Activated CD4-positive, alpha-beta T cell treated with anti-CD3 and anti-CD28 coated beads for 36 hours (primary cell): ENCODE measurements at regions of chr11 and their contacts with region 1.

Region 1: GRCh38 chr11:125874556-125875124 is 12.8 kb upstream of the HYLS1 start:
- DNase-seq: peak; percentile 70
- ATAC-seq: peak; percentile 85
- H3K4me3 Mint-ChIP-seq: no peak overlapping the region
- H3K27ac Mint-ChIP-seq: no peak overlapping the region
- H3K4me1 Mint-ChIP-seq: no peaks in the 10 kb centered on the region
- H3K27me3 Mint-ChIP-seq: peaks cover 2% of the 10 kb centered on the region

Region 2: GRCh38 chr11:125164422-125165110 is 710.1 kb before region 1 on chr11 and contains the start of gene PKNOX2:
- CTCF ChIA-PET with region 1: no interaction called
- POLR2A ChIA-PET with region 1: no interaction called
- intact Hi-C with region 1: loop called in 1 of 2 experiments (anchors 10 kb)
- DNase-seq: peak; percentile 83
- ATAC-seq: peak; percentile 85
- H3K4me3 Mint-ChIP-seq: peak within 1 kb of the TSS; percentile 77
- H3K27ac Mint-ChIP-seq: peak within 1 kb of the TSS; percentile 51
- H3K4me1 Mint-ChIP-seq: peaks cover 18% of the 10 kb centered on the region
- H3K27me3 Mint-ChIP-seq: peaks cover 53% of the 10 kb centered on the region
- total RNA-seq, gene PKNOX2: not detected

Region 3: DNA sequence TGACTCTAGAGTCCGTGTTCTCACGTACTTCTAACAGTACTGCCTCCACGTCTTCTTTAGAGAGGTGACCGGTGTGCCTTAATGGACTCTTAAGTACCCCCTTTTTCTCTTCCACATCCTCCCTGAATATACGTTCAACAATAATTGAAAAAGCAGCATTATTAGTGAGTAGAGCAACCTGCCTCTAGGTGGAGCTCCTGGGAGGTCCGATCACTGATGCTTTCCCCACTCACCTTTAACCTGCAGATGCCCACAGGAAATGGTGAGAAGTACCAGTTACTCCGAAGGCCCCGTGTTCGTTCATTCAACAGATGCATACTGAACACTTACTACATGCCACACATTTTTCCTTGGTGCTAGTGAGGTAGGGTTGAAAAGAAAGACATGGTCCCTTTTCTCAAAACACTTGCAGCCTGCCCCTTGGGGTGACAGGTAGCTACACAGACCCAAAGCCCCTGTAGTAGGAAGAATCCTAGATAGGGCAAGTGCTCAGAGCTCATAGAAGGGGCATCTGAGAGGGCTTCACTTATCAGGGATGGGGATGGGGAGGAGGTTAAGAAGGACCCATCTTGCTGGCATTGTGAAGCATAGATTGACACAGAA is 451.3 kb before region 1 on chr11:
- CTCF ChIA-PET with region 1: no interaction called
- POLR2A ChIA-PET with region 1: no interaction called
- intact Hi-C with region 1: loop called in 1 of 2 experiments (anchors 2 kb)
- DNase-seq: peak; percentile 32
- ATAC-seq: no peak
- H3K4me3 Mint-ChIP-seq: no peak overlapping the region
- H3K27ac Mint-ChIP-seq: no peak overlapping the region
- H3K4me1 Mint-ChIP-seq: peaks cover 3% of the 10 kb centered on the region
- H3K27me3 Mint-ChIP-seq: peaks cover 4% of the 10 kb centered on the region

Region 4: GRCh38 chr11:125724125-125724524 is 150.5 kb before region 1 on chr11:
- CTCF ChIA-PET with region 1: interaction called, 3 read pairs
- POLR2A ChIA-PET with region 1: no interaction called
- intact Hi-C with region 1: loop called (anchors 1 kb)
- DNase-seq: no peak
- ATAC-seq: no peak
- H3K4me3 Mint-ChIP-seq: no peak overlapping the region
- H3K27ac Mint-ChIP-seq: no peak overlapping the region
- H3K4me1 Mint-ChIP-seq: no peaks in the 10 kb centered on the region
- H3K27me3 Mint-ChIP-seq: peaks cover 19% of the 10 kb centered on the region